ENCODE measurements at regions of chr12 and their contacts with region 1.

Region 1: DNA sequence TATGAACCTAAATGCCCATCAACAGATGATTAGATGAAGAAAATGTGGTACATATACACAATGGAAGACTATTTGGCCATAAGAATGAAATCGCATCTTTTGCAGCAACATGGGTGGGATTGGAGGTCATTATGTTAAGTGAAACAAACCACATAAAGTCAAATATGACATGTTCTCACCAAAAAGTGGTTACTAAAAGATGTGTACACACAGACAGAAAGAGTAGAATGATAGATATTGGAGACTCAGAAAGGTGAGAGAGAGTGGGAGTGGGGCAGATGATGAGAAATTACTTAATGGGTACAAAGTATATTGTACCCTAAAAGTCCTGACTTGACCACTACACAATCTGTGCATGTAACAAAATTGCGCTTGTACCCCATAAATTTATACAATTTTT is 19.6 kb downstream of the VWF start:
- DNase-seq: no peak
- ATAC-seq: no peak
- H3K4me3 ChIP-seq: no peak overlapping the region
- H3K27ac ChIP-seq: no peak overlapping the region
- H3K4me1 ChIP-seq: no peaks in the 10 kb centered on the region
- H3K27me3 ChIP-seq: no peaks in the 10 kb centered on the region; a peak in 1 of 5 replicates
- CTCF ChIP-seq: no peak
- EP300 ChIP-seq: no peak
- POLR2A ChIP-seq: no peak
- RAD21 ChIP-seq: no peak

Region 2: GRCh38 chr12:6135071-6135470 is 30.2 kb after region 1 on chr12:
- CTCF ChIA-PET with region 1: no interaction called
- POLR2A ChIA-PET with region 1: no interaction called
- in situ Hi-C with region 1: no loop called
- intact Hi-C with region 1: loop called (anchors 1 kb)
- DNase-seq: no peak
- ATAC-seq: no peak
- H3K4me3 ChIP-seq: no peak overlapping the region
- H3K27ac ChIP-seq: no peak overlapping the region
- H3K4me1 ChIP-seq: no peaks in the 10 kb centered on the region
- H3K27me3 ChIP-seq: no peaks in the 10 kb centered on the region
- CTCF ChIP-seq: no peak
- EP300 ChIP-seq: no peak
- POLR2A ChIP-seq: no peak
- RAD21 ChIP-seq: no peak

Region 3: GRCh38 chr12:6195665-6196535 is 91.1 kb after region 1 on chr12:
- CTCF ChIA-PET with region 1: no interaction called
- POLR2A ChIA-PET with region 1: no interaction called
- in situ Hi-C with region 1: no loop called
- intact Hi-C with region 1: no loop called
- DNase-seq: peak; percentile 70
- ATAC-seq: peak; percentile 82
- H3K4me3 ChIP-seq: peak overlapping the region in 2 of 3 experiments; percentile 18 to 47; a peak in 3 of 6 replicates
- H3K27ac ChIP-seq: peak overlapping the region; percentile 12
- H3K4me1 ChIP-seq: peaks cover 54% of the 10 kb centered on the region
- H3K27me3 ChIP-seq: peaks cover 7 to 29% of the 10 kb centered on the region in 2 experiments
- CTCF ChIP-seq: peak; percentile 95
- EP300 ChIP-seq: no peak
- POLR2A ChIP-seq: no peak
- RAD21 ChIP-seq: peak; percentile 87

Measured in HepG2 (cell line).